GM12878 (cell line): ENCODE measurements at regions of chr7 and their contacts with region 1.

Region 1: GRCh38 chr7:69703099-69703498 is 104.8 kb downstream of the AUTS2 start:
- DNase-seq: no peak
- ATAC-seq: peak; percentile 40
- H3K4me3 ChIP-seq: no peak overlapping the region
- H3K27ac ChIP-seq: no peak overlapping the region
- H3K4me1 ChIP-seq: peaks cover 17% of the 10 kb centered on the region
- H3K27me3 ChIP-seq: no peaks in the 10 kb centered on the region
- CTCF ChIP-seq: no peak
- EP300 ChIP-seq: no peak
- POLR2A ChIP-seq: no peak
- RAD21 ChIP-seq: no peak

Region 2: DNA sequence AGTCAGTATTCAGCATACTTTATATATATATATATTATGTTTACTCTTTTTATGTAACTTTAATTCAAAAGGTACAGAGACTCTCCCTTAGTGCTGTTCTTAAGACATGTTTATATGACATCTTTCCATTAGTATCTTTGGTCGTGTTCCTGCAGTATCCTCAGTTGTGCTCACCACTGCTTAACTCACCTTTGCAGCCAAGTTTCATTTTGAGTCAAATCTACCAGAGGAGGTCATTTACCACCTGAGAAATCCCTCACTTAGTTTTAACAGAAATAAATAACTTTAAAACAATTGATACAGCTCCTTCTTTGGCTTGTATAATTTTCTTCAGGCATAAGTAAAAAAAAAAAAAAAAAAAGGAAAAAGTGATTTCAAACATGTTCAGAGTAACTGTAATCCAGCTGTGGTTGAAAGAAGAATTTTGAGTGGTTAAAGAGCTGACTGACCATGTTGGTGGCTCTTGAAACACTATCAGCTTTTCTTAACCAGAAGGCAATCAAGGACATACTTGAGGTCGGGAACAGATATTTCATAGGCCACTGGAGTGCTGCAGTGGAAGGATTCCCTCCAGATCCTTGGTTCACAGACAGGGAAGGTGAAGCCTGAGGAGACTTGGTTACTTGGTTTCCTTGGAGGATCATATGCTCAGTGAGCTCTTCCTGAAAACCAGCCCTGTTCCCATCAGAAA is 11.9 kb after region 1 on chr7:
- CTCF ChIA-PET with region 1: interaction called, 8 read pairs
- POLR2A ChIA-PET with region 1: interaction called, 6 read pairs
- RAD21 ChIA-PET with region 1: interaction called, 5 read pairs
- SMC1A ChIA-PET with region 1: interaction called, 62 read pairs
- in situ Hi-C with region 1: no loop called
- intact Hi-C with region 1: no loop called
- DNase-seq: no peak
- ATAC-seq: peak; percentile 86
- H3K4me3 ChIP-seq: no peak overlapping the region
- H3K27ac ChIP-seq: no peak overlapping the region
- H3K4me1 ChIP-seq: no peaks in the 10 kb centered on the region
- H3K27me3 ChIP-seq: no peaks in the 10 kb centered on the region
- CTCF ChIP-seq: no peak
- EP300 ChIP-seq: 0 out of 4 replicates have a peak, but pooled peaks of 1 of the 2 experiments have one; percentile 24
- POLR2A ChIP-seq: no peak
- RAD21 ChIP-seq: no peak

Region 3: DNA sequence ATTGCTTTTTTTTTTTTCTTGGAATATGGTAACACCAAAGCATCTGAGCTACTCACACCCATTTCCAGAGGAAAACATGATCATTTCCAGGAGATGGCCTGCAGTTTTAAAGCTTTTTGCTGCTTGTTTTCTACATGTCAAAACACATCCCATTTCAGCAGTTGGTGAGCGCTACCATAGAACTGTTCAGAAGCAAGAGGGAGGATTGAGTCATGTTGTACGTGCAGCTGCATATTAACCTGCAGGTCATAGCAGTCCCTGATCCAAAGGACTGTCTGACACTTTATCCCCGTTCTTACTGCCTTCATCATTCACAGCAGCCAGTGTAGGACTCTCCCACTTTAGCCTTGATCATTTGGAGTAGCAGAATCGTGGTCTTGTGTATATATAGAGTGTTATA is 19.7 kb after region 1 on chr7:
- CTCF ChIA-PET with region 1: interaction called, 4 read pairs
- POLR2A ChIA-PET with region 1: no interaction called
- RAD21 ChIA-PET with region 1: interaction called, 3 read pairs
- SMC1A ChIA-PET with region 1: interaction called, 62 read pairs
- in situ Hi-C with region 1: no loop called
- intact Hi-C with region 1: no loop called
- DNase-seq: no peak
- ATAC-seq: no peak
- H3K4me3 ChIP-seq: no peak overlapping the region
- H3K27ac ChIP-seq: no peak overlapping the region
- H3K4me1 ChIP-seq: no peaks in the 10 kb centered on the region
- H3K27me3 ChIP-seq: no peaks in the 10 kb centered on the region
- CTCF ChIP-seq: no peak
- EP300 ChIP-seq: no peak
- POLR2A ChIP-seq: no peak
- RAD21 ChIP-seq: no peak

Region 4: GRCh38 chr7:69728304-69728703 is 25.2 kb after region 1 on chr7:
- CTCF ChIA-PET with region 1: interaction called, 4 read pairs
- POLR2A ChIA-PET with region 1: no interaction called
- RAD21 ChIA-PET with region 1: interaction called, 3 read pairs
- SMC1A ChIA-PET with region 1: interaction called, 17 read pairs
- in situ Hi-C with region 1: no loop called
- intact Hi-C with region 1: no loop called
- DNase-seq: no peak
- ATAC-seq: no peak; the same call in 2 of the 3 replicates
- H3K4me3 ChIP-seq: no peak overlapping the region
- H3K27ac ChIP-seq: no peak overlapping the region
- H3K4me1 ChIP-seq: no peaks in the 10 kb centered on the region
- H3K27me3 ChIP-seq: no peaks in the 10 kb centered on the region; a peak in 1 of 4 replicates
- CTCF ChIP-seq: no peak
- EP300 ChIP-seq: no peak
- POLR2A ChIP-seq: no peak
- RAD21 ChIP-seq: no peak

Region 5: GRCh38 chr7:69845721-69846495 is 142.8 kb after region 1 on chr7:
- CTCF ChIA-PET with region 1: no interaction called
- POLR2A ChIA-PET with region 1: no interaction called
- RAD21 ChIA-PET with region 1: no interaction called
- SMC1A ChIA-PET with region 1: no interaction called
- in situ Hi-C with region 1: no loop called
- intact Hi-C with region 1: no loop called
- DNase-seq: no peak
- ATAC-seq: peak; percentile 56
- H3K4me3 ChIP-seq: no peak overlapping the region
- H3K27ac ChIP-seq: no peak overlapping the region
- H3K4me1 ChIP-seq: peaks cover 48% of the 10 kb centered on the region
- H3K27me3 ChIP-seq: no peaks in the 10 kb centered on the region
- CTCF ChIP-seq: no peak
- EP300 ChIP-seq: no peak
- POLR2A ChIP-seq: no peak
- RAD21 ChIP-seq: no peak